ENCODE measurements at regions of chr5 and their contacts with region 1.

Region 1: GRCh38 chr5:78537821-78538220 is 110.8 kb downstream of the LHFPL2 start:
- DNase-seq: peak; percentile 22
- ATAC-seq: peak; percentile 82
- H3K4me3 ChIP-seq: no peak overlapping the region
- H3K27ac ChIP-seq: no peak overlapping the region
- H3K4me1 ChIP-seq: no peaks in the 10 kb centered on the region
- H3K27me3 ChIP-seq: no peaks in the 10 kb centered on the region
- CTCF ChIP-seq: peak; percentile 69
- EP300 ChIP-seq: no peak
- POLR2A ChIP-seq: no peak
- RAD21 ChIP-seq: peak; percentile 51

Region 2: DNA sequence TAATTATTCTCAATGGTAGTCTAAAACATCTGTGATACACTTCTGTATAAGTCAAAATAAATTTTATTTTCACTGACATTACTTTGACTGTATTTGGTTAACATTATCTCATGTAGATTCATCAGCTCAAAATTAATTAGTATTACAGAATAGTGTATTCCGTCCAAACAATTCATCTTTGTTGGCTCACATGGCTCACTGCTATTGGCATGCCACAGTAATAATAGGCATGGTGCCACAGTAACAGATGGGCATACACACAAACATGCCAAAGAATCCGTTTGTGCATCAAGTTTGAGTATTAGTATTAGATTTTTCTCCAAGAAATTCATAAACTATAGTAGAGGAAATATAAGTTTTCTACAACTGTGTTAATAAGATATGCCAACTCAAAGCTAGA is 257.6 kb before region 1 on chr5:
- CTCF ChIA-PET with region 1: no interaction called
- POLR2A ChIA-PET with region 1: no interaction called
- in situ Hi-C with region 1: no loop called
- intact Hi-C with region 1: no loop called
- DNase-seq: no peak
- ATAC-seq: no peak
- H3K4me3 ChIP-seq: no peak overlapping the region
- H3K27ac ChIP-seq: no peak overlapping the region
- H3K4me1 ChIP-seq: peaks cover 14% of the 10 kb centered on the region
- H3K27me3 ChIP-seq: no peaks in the 10 kb centered on the region
- CTCF ChIP-seq: no peak
- EP300 ChIP-seq: no peak
- POLR2A ChIP-seq: no peak
- RAD21 ChIP-seq: no peak

Region 3: DNA sequence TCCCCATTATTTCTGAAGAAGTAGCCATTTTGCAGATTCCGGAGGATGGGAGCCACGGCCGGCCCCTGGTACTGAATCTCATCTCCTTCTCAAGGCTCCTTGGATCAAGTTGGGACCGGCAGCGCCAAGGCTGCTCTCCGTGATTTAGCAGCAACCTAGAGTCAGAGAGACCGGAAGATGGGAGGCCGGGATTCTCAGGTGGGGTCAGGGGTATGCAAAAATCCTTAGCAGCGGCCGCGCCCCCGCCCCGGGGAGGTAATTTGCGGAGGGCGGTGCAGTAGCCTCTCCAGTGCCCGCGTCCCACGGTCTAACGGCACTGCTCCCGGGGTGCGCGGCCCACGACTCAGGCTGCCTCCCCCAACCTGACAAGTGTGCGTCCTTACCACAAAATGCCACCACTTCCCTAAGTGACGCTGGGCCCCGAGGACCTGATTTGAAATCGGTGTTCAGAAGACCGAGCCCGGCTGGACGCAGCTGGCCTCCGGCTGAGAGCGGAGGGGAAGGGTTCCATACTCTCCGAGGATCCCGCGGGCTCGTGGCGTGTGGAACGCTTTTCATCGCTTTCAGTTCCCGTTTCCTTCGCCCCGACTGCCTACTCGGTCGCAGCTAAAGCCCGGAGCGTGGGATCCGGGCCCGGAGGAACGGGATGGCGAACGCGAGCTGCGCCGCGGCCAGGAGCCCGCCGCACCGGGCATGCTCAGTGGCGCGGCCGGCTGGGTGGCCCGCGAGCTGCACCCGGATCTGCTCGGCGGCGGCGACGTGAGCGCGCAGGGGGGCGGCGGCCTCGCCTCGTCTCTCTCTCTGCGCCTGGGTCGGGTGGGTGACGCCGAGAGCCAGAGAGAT is 177.8 kb before region 1 on chr5 and contains the start of gene SCAMP1:
- CTCF ChIA-PET with region 1: no interaction called
- POLR2A ChIA-PET with region 1: no interaction called
- in situ Hi-C with region 1: no loop called
- intact Hi-C with region 1: loop called (anchors 2 kb)
- DNase-seq: peak; percentile 77
- ATAC-seq: peak; percentile 97
- H3K4me3 ChIP-seq: peak within 1 kb of the TSS; percentile 93 to 99 (median 96)
- H3K27ac ChIP-seq: peak within 1 kb of the TSS; percentile 86
- H3K4me1 ChIP-seq: peaks cover 32% of the 10 kb centered on the region
- H3K27me3 ChIP-seq: no peaks in the 10 kb centered on the region; a peak in 1 of 5 replicates
- CTCF ChIP-seq: peak; percentile 51; the same call in 1 of the 2 replicates
- EP300 ChIP-seq: peak in 1 of 2 experiments; percentile 22; a peak in 1 of 4 replicates
- POLR2A ChIP-seq: peak; percentile 76 to 85
- RAD21 ChIP-seq: peak; percentile 50; the same call in 1 of the 2 replicates
- total RNA-seq, gene SCAMP1: 27.0 and 33.7 TPM in 2 replicates

Region 4: GRCh38 chr5:78467752-78468357 is 70.0 kb before region 1 on chr5:
- CTCF ChIA-PET with region 1: interaction called, 12 read pairs
- POLR2A ChIA-PET with region 1: no interaction called
- in situ Hi-C with region 1: no loop called
- intact Hi-C with region 1: loop called (anchors 2 kb)
- DNase-seq: peak; percentile 31
- ATAC-seq: peak; percentile 71
- H3K4me3 ChIP-seq: no peak overlapping the region
- H3K27ac ChIP-seq: no peak overlapping the region
- H3K4me1 ChIP-seq: peaks cover 5% of the 10 kb centered on the region; the same call in 1 of the 2 replicates
- H3K27me3 ChIP-seq: no peaks in the 10 kb centered on the region
- CTCF ChIP-seq: peak; percentile 66
- EP300 ChIP-seq: no peak
- POLR2A ChIP-seq: no peak
- RAD21 ChIP-seq: no peak

Region 5: GRCh38 chr5:78621291-78621738 is 83.5 kb after region 1 on chr5:
- CTCF ChIA-PET with region 1: no interaction called
- POLR2A ChIA-PET with region 1: no interaction called
- in situ Hi-C with region 1: no loop called
- intact Hi-C with region 1: loop called (anchors 5 kb)
- DNase-seq: no peak
- ATAC-seq: no peak
- H3K4me3 ChIP-seq: no peak overlapping the region
- H3K27ac ChIP-seq: no peak overlapping the region
- H3K4me1 ChIP-seq: peaks cover 46% of the 10 kb centered on the region
- H3K27me3 ChIP-seq: no peaks in the 10 kb centered on the region
- CTCF ChIP-seq: no peak
- EP300 ChIP-seq: no peak
- POLR2A ChIP-seq: no peak
- RAD21 ChIP-seq: no peak